Activated CD4-positive, alpha-beta memory T cell treated with anti-CD3 and anti-CD28 coated beads, Interleukin-2, amount 10 ng/mL, durations not matched to agents 7 days and 5 days (primary cell): ENCODE measurements at regions of chr20 and their contacts with region 1.

Region 1: GRCh38 chr20:2172305-2173175 is 70.9 kb downstream of the STK35 start:
- DNase-seq: peak; percentile 69
- H3K4me3 Mint-ChIP-seq: no peak overlapping the region
- H3K27ac Mint-ChIP-seq: no peak overlapping the region
- H3K4me1 Mint-ChIP-seq: peaks cover 2% of the 10 kb centered on the region
- H3K27me3 Mint-ChIP-seq: peaks cover 10% of the 10 kb centered on the region

Region 2: DNA sequence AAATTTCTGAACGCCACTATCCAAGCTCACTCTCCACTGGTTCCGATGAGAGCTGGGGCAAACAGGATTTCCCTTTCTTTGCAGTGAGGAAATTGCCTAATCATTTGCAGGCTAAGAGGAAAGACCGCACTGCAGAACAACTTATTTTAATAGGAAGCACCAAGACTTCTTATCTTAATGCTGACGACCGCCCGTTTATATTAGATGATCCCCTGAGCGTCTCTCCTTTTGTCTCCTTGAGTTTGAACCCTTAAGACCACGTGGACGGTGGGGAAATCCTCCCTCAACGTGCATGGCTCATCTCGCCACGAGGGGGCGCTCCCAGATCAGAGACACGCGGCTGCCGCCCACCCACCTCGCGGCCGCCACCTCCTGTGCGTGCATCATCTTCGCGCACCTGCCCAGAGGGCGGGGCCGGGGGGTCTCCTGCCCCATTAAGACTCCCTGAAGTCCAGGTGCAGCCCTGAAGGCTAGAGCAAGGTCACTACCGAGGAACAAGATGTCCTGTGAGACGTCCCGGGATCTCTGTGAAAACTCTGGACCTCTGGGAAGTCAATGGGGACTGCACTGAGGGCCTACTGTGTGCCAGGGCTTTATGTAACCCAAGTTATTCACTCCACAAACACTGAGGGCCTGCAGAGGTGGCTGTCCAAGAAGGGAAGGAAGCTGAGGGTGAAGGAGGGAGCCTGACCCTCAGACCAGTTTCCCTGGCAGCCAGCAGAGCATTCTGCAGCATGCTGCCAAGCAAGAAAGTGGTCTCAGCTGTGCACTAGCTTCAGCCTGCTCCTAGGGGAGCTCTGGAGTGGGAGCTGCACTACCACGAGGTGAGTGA is 206.8 kb before region 1 on chr20:
- CTCF ChIA-PET with region 1: interaction called, 25 read pairs
- POLR2A ChIA-PET with region 1: no interaction called
- DNase-seq: peak; percentile 72
- H3K4me3 Mint-ChIP-seq: peak overlapping the region; percentile 28
- H3K27ac Mint-ChIP-seq: no peak overlapping the region
- H3K4me1 Mint-ChIP-seq: peaks cover 8% of the 10 kb centered on the region
- H3K27me3 Mint-ChIP-seq: peaks cover 17% of the 10 kb centered on the region

Region 3: DNA sequence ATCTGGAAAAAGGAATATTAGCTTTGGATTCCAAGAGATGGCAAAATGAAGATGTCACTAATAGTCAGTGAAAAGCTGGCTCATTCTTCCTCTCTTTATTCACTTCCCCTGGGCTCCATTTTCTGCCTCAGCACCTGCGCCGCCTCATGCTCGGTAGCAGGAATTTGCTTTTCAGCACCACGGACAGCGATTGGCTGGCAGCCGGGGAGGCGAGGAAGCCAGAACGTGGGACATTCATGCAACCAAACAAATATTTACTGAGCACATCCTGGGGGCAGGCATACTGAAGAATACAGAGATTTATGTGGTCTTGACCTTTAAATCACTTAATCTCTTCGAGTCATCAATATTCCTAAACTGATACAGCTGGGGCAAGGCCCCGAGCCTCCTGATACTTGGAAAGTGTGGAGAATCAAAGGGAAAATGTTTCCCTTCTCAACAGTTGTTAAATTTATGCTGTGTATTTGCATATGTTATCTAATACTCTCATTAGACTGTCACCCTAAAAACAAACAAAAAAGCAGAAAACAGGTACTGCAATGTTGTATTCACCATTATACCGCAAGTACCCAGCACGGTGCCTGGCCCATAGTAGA is 166.6 kb before region 1 on chr20:
- CTCF ChIA-PET with region 1: interaction called, 58 read pairs
- POLR2A ChIA-PET with region 1: no interaction called
- DNase-seq: peak; percentile 69
- H3K4me3 Mint-ChIP-seq: no peak overlapping the region
- H3K27ac Mint-ChIP-seq: no peak overlapping the region
- H3K4me1 Mint-ChIP-seq: no peaks in the 10 kb centered on the region
- H3K27me3 Mint-ChIP-seq: peaks cover 10% of the 10 kb centered on the region

Region 4: DNA sequence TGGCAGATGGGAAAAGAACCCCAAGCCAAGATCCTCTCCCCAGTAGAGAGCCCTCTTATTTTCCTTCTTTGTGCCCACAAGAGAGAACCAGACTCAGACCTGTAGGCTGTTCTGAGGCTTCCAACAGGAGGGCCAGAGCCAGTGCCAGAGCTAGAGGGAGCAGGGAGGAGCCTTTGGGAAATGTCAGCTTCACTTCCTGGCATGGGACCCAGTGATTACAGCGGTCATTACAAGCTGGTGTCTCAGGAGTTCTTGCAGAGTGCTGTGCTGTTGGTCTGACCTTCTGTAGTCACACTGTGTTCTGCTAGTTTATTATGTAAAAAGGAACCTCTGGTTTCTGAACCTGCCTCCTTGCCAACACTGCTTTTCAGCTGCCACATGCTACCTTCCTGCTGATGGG is 32.0 kb before region 1 on chr20:
- CTCF ChIA-PET with region 1: no interaction called
- POLR2A ChIA-PET with region 1: no interaction called
- DNase-seq: no peak
- H3K4me3 Mint-ChIP-seq: no peak overlapping the region
- H3K27ac Mint-ChIP-seq: no peak overlapping the region
- H3K4me1 Mint-ChIP-seq: peaks cover 4% of the 10 kb centered on the region
- H3K27me3 Mint-ChIP-seq: no peaks in the 10 kb centered on the region

Region 5: GRCh38 chr20:2183381-2183780 is 10.8 kb after region 1 on chr20:
- CTCF ChIA-PET with region 1: interaction called, 12 read pairs
- POLR2A ChIA-PET with region 1: no interaction called
- DNase-seq: no peak
- H3K4me3 Mint-ChIP-seq: no peak overlapping the region
- H3K27ac Mint-ChIP-seq: no peak overlapping the region
- H3K4me1 Mint-ChIP-seq: no peaks in the 10 kb centered on the region
- H3K27me3 Mint-ChIP-seq: peaks cover 15% of the 10 kb centered on the region